Prostate gland (tissue), 2 donors: ENCODE measurements at regions of chr20 and their contacts with region 1.

Region 1: DNA sequence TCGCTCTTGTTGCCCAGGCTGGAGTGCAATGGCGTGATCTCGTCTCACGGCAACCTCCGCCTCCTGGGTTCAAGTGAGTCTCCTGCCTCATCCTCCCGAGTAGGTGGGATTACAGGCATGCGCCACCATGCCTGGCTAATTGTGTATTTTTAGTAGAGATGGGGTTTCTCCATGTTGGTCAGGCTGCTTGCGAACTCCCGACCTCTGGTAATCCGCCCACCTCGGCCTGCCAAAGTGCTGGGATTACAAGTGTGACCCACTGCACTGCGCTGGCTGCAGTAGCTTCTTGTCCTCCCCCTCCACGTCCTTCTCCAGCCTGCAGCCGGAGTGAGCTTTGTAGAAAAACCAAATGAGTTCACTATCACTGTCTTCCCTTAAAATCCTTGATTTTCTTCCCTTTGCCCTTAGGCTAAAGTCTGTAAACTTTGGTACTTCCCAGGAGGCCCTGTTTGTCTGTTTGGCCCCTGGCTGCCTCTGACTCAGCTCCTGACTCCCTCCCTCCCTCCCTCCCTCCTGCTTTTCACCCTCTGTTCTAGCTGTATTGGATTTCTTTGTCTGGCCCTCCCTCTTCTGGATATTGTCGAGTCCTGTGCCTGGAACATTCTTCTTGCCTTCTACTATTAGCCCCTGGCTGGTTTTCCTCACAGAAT is 12.9 kb downstream of the PARD6B start:
- DNase-seq: peak; percentile 67
- H3K4me3 ChIP-seq: no peak overlapping the region
- H3K27ac ChIP-seq: peak overlapping the region; percentile 71 to 76
- H3K4me1 ChIP-seq: peaks cover 3% of the 10 kb centered on the region
- H3K27me3 ChIP-seq: no peaks in the 10 kb centered on the region
- CTCF ChIP-seq: peak in 2 of 4 experiments; percentile 38 to 42
- POLR2A ChIP-seq: no peak

Region 2: GRCh38 chr20:50478162-50479036 is 265.9 kb before region 1 on chr20:
- intact Hi-C with region 1: loop called (anchors 10 kb)
- DNase-seq: peak; percentile 36
- H3K4me3 ChIP-seq: no peak overlapping the region
- H3K27ac ChIP-seq: no peak overlapping the region
- H3K4me1 ChIP-seq: no peaks in the 10 kb centered on the region
- H3K27me3 ChIP-seq: no peaks in the 10 kb centered on the region
- CTCF ChIP-seq: peak in 3 of 4 experiments; percentile 34 to 72 (median 59)
- POLR2A ChIP-seq: no peak

Region 3: GRCh38 chr20:50625986-50626677 is 118.1 kb before region 1 on chr20:
- intact Hi-C with region 1: loop called (anchors 2 kb)
- DNase-seq: no peak
- H3K4me3 ChIP-seq: no peak overlapping the region
- H3K27ac ChIP-seq: no peak overlapping the region
- H3K4me1 ChIP-seq: no peaks in the 10 kb centered on the region
- H3K27me3 ChIP-seq: no peaks in the 10 kb centered on the region
- CTCF ChIP-seq: peak in 3 of 4 experiments; percentile 24 to 54 (median 40)
- POLR2A ChIP-seq: no peak